Right ventricle myocardium inferior (tissue), 1 donor: ENCODE measurements at regions of chr21 and their contacts with region 1.

Region 1: GRCh38 chr21:43975495-43975993 is 36.6 kb upstream of the TRAPPC10 start:
- DNase-seq: peak; percentile 89
- ATAC-seq: peak; percentile 83

Region 2: GRCh38 chr21:43810505-43811261 is 164.9 kb before region 1 on chr21:
- intact Hi-C with region 1: loop called (anchors 1 kb)
- DNase-seq: peak; percentile 92
- ATAC-seq: peak; percentile 88

Region 3: GRCh38 chr21:43938751-43939442 is 36.6 kb before region 1 on chr21:
- intact Hi-C with region 1: loop called (anchors 5 kb)
- DNase-seq: peak; percentile 91
- ATAC-seq: peak; percentile 82

Region 4: GRCh38 chr21:44083631-44084291 is 108.2 kb after region 1 on chr21:
- intact Hi-C with region 1: loop called (anchors 5 kb)
- DNase-seq: no peak
- ATAC-seq: no peak